Activated T-helper 1 cell treated with anti-CD3 and anti-CD28 coated beads, Interleukin-12 subunit alpha, Interleukin-12 subunit beta, Interleukin-2, Interleukin-4 antibody, amounts not matched to agents 30 ng/mL and 10 ng/mL and 1 ng/mL, durations not matched to agents 14 hours and 24 hours and 36 hours (primary cell): ENCODE measurements at regions of chr12 and their contacts with region 1.

Region 1: DNA sequence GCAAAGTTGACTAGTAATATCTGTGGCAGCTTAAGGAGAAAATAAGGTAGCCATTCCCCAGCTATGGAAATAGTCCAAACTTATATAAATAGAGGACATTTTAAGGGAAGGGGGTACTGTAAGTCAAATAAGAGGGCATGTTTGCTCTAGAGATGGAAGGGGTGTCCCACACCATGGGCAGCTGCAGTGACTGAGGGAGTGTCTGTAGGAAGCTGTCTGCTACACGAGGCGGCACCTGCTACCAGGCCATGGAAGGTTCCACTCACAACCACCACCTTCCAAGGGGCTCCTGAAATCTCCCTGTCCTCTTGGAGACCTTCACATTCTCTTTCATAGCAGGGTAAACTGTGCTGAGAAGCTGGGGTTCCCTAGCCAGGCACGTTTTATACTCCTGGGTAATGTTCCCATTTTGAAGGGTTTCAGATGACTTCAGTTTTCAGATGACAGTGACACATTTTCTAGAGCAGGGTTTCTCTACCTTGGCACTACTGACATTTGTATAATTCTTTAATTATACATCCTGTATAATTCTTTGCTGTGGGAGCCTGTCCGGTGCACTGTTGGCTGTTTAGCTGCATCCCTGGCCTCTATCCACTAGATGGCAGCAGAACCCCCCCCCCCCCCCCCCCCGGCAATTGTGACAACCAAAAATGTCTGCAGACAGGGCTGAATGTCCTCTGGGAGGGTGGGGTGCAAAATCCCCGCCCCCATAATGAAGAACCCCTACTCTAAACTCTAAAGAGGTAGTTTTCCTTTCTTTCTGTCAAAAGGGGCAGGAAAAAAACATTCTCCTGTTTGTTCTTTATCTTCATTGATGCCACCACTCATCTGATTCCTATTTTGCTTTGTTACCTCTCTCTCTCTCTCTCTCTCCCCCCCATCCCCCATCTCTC is 11.6 kb upstream of the SMCO2 start:
- DNase-seq: no peak
- H3K4me3 Mint-ChIP-seq: no peak overlapping the region
- H3K27ac Mint-ChIP-seq: peak overlapping the region; percentile 85
- H3K4me1 Mint-ChIP-seq: peaks cover 87% of the 10 kb centered on the region
- H3K27me3 Mint-ChIP-seq: no peaks in the 10 kb centered on the region

Region 2: GRCh38 chr12:27462151-27462694 is 27.3 kb after region 1 on chr12:
- intact Hi-C with region 1: loop called (anchors 1 kb)
- DNase-seq: no peak
- H3K4me3 Mint-ChIP-seq: peak overlapping the region; percentile 53
- H3K27ac Mint-ChIP-seq: peak overlapping the region; percentile 84
- H3K4me1 Mint-ChIP-seq: peaks cover 69% of the 10 kb centered on the region
- H3K27me3 Mint-ChIP-seq: no peaks in the 10 kb centered on the region

Region 3: DNA sequence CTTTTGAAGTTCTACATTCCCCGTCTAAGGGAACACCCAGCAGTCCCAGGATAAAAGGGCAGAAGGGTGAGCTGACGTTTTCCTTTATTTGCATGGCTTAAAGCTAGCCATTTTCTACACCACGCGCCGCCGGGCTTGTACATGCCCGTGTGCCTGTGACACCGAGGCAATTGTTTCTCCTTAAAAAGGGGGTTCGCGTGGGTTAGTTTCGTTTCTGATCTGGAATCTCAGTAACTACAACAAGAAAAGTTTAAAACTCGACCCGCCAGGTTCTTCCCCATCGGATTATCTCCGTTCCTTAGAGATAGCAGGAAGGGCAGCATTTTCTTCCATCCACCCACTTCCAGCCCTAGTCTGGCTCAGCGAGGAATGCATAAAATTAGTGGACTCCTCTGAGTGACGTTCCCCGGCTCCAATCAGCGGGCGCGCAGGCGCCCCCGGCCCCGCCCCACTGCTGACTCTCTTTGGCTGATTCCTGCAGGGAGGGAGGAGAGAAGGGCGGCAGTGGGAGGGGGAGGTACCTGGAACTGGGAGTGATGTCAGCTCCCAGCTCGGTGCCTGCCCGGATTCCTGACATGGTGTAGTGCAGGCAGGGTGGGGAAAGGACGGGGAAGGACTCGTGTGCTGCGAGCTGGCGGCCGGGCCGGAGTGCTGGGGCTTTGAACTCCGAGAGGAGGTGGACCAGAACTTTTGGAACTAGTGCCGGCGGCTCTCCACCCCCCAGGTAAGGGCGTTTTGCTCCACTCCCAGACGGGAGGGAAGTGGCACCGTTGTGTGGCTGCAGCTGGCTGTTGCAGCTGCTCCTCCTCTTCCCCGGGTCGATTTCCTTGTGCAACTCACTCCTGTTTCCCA is 88.9 kb after region 1 on chr12 and contains the start of gene PPFIBP1:
- intact Hi-C with region 1: loop called (anchors 1 kb)
- DNase-seq: peak; percentile 83
- H3K4me3 Mint-ChIP-seq: peak within 1 kb of the TSS; percentile 89
- H3K27ac Mint-ChIP-seq: peak within 1 kb of the TSS; percentile 90
- H3K4me1 Mint-ChIP-seq: peaks cover 56% of the 10 kb centered on the region
- H3K27me3 Mint-ChIP-seq: peaks cover 19% of the 10 kb centered on the region
- total RNA-seq, gene PPFIBP1: 53.8 and 55.7 TPM in 2 replicates

Region 4: GRCh38 chr12:27635349-27635972 is 200.5 kb after region 1 on chr12:
- intact Hi-C with region 1: loop called (anchors 1 kb)
- DNase-seq: no peak
- H3K4me3 Mint-ChIP-seq: no peak overlapping the region
- H3K27ac Mint-ChIP-seq: no peak overlapping the region
- H3K4me1 Mint-ChIP-seq: peaks cover 39% of the 10 kb centered on the region
- H3K27me3 Mint-ChIP-seq: peaks cover 2% of the 10 kb centered on the region

Region 5: GRCh38 chr12:27703710-27704452 is 269.0 kb after region 1 on chr12:
- intact Hi-C with region 1: loop called (anchors 1 kb)
- DNase-seq: peak; percentile 62
- H3K4me3 Mint-ChIP-seq: no peak overlapping the region
- H3K27ac Mint-ChIP-seq: no peak overlapping the region
- H3K4me1 Mint-ChIP-seq: no peaks in the 10 kb centered on the region
- H3K27me3 Mint-ChIP-seq: peaks cover 11% of the 10 kb centered on the region